Activated T-helper 1 cell treated with anti-CD3 and anti-CD28 coated beads, Interleukin-12 subunit alpha, Interleukin-12 subunit beta, Interleukin-2, Interleukin-4 antibody, amounts not matched to agents 30 ng/mL and 10 ng/mL and 1 ng/mL, durations not matched to agents 14 hours and 24 hours and 36 hours (primary cell): ENCODE measurements at regions of chr10 and their contacts with region 1.

Region 1: GRCh38 chr10:132446661-132447194 is 49.7 kb downstream of the PWWP2B start:
- DNase-seq: peak; percentile 63
- H3K4me3 Mint-ChIP-seq: peak overlapping the region; percentile 70
- H3K27ac Mint-ChIP-seq: peak overlapping the region; percentile 98
- H3K4me1 Mint-ChIP-seq: peaks cover 30% of the 10 kb centered on the region
- H3K27me3 Mint-ChIP-seq: peaks cover 1% of the 10 kb centered on the region

Region 2: GRCh38 chr10:131981429-131982184 is 465.1 kb before region 1 on chr10 and contains the start of gene BNIP3:
- intact Hi-C with region 1: loop called (anchors 5 kb)
- DNase-seq: peak; percentile 90
- H3K4me3 Mint-ChIP-seq: peak within 1 kb of the TSS; percentile 88
- H3K27ac Mint-ChIP-seq: peak within 1 kb of the TSS; percentile 48
- H3K4me1 Mint-ChIP-seq: peaks cover 36% of the 10 kb centered on the region
- H3K27me3 Mint-ChIP-seq: peaks cover 25% of the 10 kb centered on the region
- total RNA-seq, gene BNIP3: 43.0 and 48.9 TPM in 2 replicates

Region 3: DNA sequence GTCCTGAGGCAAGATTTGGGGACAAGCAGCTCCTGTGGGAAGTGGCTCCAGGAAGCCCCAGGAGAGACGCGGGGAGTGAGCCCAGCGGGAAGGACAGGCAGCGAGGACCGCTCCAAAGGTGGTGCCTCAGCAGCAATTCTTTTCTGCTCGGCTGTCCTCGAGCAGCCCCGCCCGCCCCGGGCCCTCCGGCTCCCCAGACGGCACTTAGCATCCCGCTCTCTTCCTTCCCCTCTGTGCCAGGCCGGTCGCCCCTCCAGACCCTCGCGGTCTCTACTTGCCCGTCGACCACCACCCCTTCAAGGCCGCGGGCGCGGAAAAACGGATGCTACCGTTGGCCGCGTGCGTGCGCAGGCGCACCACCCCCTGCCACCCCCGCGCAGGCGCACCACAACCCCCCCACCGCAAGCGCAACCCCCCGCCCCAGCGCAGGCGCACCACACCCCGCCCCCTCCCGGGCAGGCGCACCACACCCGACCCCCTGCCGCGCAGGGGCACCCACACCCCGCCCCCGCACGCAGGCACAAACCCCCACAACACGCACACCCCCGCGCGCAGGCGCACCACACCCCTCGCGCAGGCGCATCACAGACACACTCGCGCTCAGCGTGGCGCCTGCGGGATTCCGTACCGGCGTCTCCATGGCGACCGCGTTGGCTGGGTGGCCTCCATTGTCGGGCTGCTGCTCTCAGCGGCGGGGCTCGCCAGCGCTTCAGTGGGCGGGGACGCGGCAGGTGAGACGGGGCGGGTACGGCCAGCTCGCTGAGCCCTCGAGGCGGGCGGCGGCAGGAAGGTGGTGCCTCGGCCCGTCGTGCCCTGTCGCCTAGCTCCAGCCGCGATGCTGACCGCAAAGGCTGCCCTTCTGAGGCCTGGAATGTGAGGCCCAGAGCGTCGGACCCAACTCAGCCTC is 114.9 kb before region 1 on chr10 and contains the start of gene LRRC27:
- intact Hi-C with region 1: loop called (anchors 1 kb)
- DNase-seq: peak; percentile 100
- H3K4me3 Mint-ChIP-seq: peak within 1 kb of the TSS; percentile 91
- H3K27ac Mint-ChIP-seq: peak within 1 kb of the TSS; percentile 96
- H3K4me1 Mint-ChIP-seq: peaks cover 58% of the 10 kb centered on the region
- H3K27me3 Mint-ChIP-seq: peaks cover 3% of the 10 kb centered on the region
- total RNA-seq, gene LRRC27: 1.7 and 3.4 TPM in 2 replicates

Region 4: GRCh38 chr10:132341781-132342180 is 104.9 kb before region 1 on chr10:
- intact Hi-C with region 1: no loop called
- DNase-seq: no peak
- H3K4me3 Mint-ChIP-seq: no peak overlapping the region
- H3K27ac Mint-ChIP-seq: no peak overlapping the region
- H3K4me1 Mint-ChIP-seq: peaks cover 11% of the 10 kb centered on the region
- H3K27me3 Mint-ChIP-seq: peaks cover 5% of the 10 kb centered on the region

Region 5: GRCh38 chr10:132396495-132397035 is 50.2 kb before region 1 on chr10:
- intact Hi-C with region 1: loop called (anchors 1 kb)
- DNase-seq: peak; percentile 57
- H3K4me3 Mint-ChIP-seq: no peak overlapping the region
- H3K27ac Mint-ChIP-seq: no peak overlapping the region
- H3K4me1 Mint-ChIP-seq: peaks cover 8% of the 10 kb centered on the region
- H3K27me3 Mint-ChIP-seq: peaks cover 4% of the 10 kb centered on the region

Region 6: GRCh38 chr10:132434405-132435005 is 12.2 kb before region 1 on chr10:
- intact Hi-C with region 1: loop called (anchors 1 kb)
- DNase-seq: peak; percentile 42
- H3K4me3 Mint-ChIP-seq: no peak overlapping the region
- H3K27ac Mint-ChIP-seq: peak overlapping the region; percentile 48
- H3K4me1 Mint-ChIP-seq: peaks cover 8% of the 10 kb centered on the region
- H3K27me3 Mint-ChIP-seq: no peaks in the 10 kb centered on the region

Region 7: GRCh38 chr10:132463333-132464252 is 16.9 kb after region 1 on chr10:
- intact Hi-C with region 1: no loop called
- DNase-seq: no peak
- H3K4me3 Mint-ChIP-seq: no peak overlapping the region
- H3K27ac Mint-ChIP-seq: no peak overlapping the region
- H3K4me1 Mint-ChIP-seq: no peaks in the 10 kb centered on the region
- H3K27me3 Mint-ChIP-seq: peaks cover 2% of the 10 kb centered on the region